Activated T-helper 2 cell treated with anti-CD3 and anti-CD28 coated beads, Interferon-gamma antibody, Interleukin-2, Interleukin-4, amounts not matched to agents 10 μg/mL and 5 μg/mL and 100 μg/mL, durations not matched to agents 14 hours and 24 hours and 36 hours (primary cell): ENCODE measurements at regions of chr1 and their contacts with region 1.

Region 1: DNA sequence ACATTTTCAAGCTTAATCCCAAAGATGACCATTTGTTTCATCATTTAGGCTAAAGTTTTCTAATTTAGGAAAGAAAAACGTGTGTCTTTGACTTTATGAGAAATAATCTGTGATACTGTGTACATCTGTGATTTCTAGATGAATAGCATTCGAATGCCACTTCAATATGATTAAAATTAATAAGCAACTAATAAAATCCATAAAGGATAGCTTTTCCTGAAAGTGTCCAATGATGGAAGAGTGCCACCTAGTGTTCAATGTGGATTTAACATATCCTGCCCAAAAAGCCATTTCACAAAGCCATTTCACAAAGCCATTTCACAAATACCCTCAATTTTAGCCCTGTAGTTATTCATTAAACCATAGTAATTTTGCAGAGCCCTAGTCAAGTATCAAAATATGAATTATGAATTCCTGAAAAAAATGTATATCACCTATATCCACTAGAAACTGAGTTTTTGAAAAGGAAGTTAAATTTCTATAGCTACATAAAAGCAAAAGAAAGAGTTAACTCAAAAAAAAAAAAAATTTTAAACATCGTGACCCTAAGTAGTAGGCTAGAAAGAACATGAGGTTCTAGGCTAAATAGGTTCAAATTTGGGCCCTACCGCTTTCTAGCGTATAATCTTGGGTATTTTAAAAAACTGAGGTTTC is 19.1 kb downstream of the NME7 start:
- DNase-seq: no peak
- H3K4me3 Mint-ChIP-seq: no peak overlapping the region
- H3K27ac Mint-ChIP-seq: no peak overlapping the region
- H3K4me1 Mint-ChIP-seq: peaks cover 20% of the 10 kb centered on the region
- H3K27me3 Mint-ChIP-seq: no peaks in the 10 kb centered on the region

Region 2: GRCh38 chr1:168603501-168604110 is 744.9 kb before region 1 on chr1:
- intact Hi-C with region 1: loop called (anchors 5 kb)
- DNase-seq: peak; percentile 51
- H3K4me3 Mint-ChIP-seq: no peak overlapping the region
- H3K27ac Mint-ChIP-seq: no peak overlapping the region
- H3K4me1 Mint-ChIP-seq: peaks cover 5% of the 10 kb centered on the region
- H3K27me3 Mint-ChIP-seq: peaks cover 11% of the 10 kb centered on the region